ENCODE measurements at regions of chr19 and their contacts with region 1.

Region 1: DNA sequence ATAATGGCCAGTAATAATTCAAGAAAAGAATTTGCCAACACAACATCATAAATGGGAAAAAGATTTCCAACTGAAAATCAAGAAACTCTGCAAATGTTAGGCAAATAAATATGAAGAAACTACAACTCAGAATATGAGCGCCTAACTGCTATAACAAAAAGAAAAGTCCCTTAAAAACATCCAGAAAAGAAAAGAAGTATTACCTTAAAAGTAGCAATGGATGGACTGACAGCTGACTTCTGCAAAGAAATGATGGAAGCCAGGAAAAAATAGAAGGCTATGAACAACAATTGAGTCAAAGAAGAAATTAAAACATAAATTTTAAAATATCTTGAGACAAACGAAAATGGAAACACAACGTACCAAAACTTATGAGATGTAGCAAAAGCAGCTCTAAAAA is 482.3 kb upstream of the ZNF507 start:
- DNase-seq: no peak
- H3K4me3 ChIP-seq: no peak overlapping the region
- H3K27ac ChIP-seq: no peak overlapping the region
- H3K4me1 ChIP-seq: no peaks in the 10 kb centered on the region
- H3K27me3 ChIP-seq: no peaks in the 10 kb centered on the region
- CTCF ChIP-seq: no peak

Region 2: GRCh38 chr19:31759359-31759758 is 103.8 kb before region 1 on chr19:
- CTCF ChIA-PET with region 1: no interaction called
- dilution Hi-C with region 1: no loop called
- in situ Hi-C with region 1: no loop called
- intact Hi-C with region 1: no loop called
- DNase-seq: no peak
- H3K4me3 ChIP-seq: no peak overlapping the region
- H3K27ac ChIP-seq: no peak overlapping the region
- H3K4me1 ChIP-seq: no peaks in the 10 kb centered on the region
- H3K27me3 ChIP-seq: no peaks in the 10 kb centered on the region
- CTCF ChIP-seq: no peak

Region 3: GRCh38 chr19:31897292-31897691 is 34.2 kb after region 1 on chr19:
- CTCF ChIA-PET with region 1: no interaction called
- dilution Hi-C with region 1: loop called (anchors 5 kb)
- in situ Hi-C with region 1: no loop called
- intact Hi-C with region 1: no loop called
- DNase-seq: no peak
- H3K4me3 ChIP-seq: no peak overlapping the region
- H3K27ac ChIP-seq: no peak overlapping the region
- H3K4me1 ChIP-seq: no peaks in the 10 kb centered on the region
- H3K27me3 ChIP-seq: no peaks in the 10 kb centered on the region
- CTCF ChIP-seq: no peak